Gastrocnemius medialis (tissue), 4 donors: ENCODE measurements at regions of chrX and their contacts with region 1.

Region 1: GRCh38 chrX:150062292-150063137 is 124.2 kb upstream of the EOLA2 start:
- DNase-seq: peak; percentile 67 to 82
- ATAC-seq: peak; percentile 99 to 100
- H3K4me3 ChIP-seq: no peak overlapping the region
- H3K27ac ChIP-seq: peak overlapping the region; percentile 61 to 74 (median 70)
- H3K4me1 ChIP-seq: peaks cover 4% of the 10 kb centered on the region in 2 donors
- H3K27me3 ChIP-seq: no peaks in the 10 kb centered on the region
- CTCF ChIP-seq: peak in 3 of 5 experiments; percentile 11 to 36 (median 29)
- POLR2A ChIP-seq: no peak

Region 2: GRCh38 chrX:149638860-149639259 is 423.7 kb before region 1 on chrX:
- in situ Hi-C with region 1: no loop called
- intact Hi-C with region 1: no loop called
- DNase-seq: no peak
- ATAC-seq: no peak
- H3K4me3 ChIP-seq: no peak overlapping the region
- H3K27ac ChIP-seq: no peak overlapping the region
- H3K4me1 ChIP-seq: no peaks in the 10 kb centered on the region
- H3K27me3 ChIP-seq: peaks cover 0 to 4% (median 0%) of the 10 kb centered on the region in 3 donors
- CTCF ChIP-seq: no peak
- POLR2A ChIP-seq: no peak

Region 3: DNA sequence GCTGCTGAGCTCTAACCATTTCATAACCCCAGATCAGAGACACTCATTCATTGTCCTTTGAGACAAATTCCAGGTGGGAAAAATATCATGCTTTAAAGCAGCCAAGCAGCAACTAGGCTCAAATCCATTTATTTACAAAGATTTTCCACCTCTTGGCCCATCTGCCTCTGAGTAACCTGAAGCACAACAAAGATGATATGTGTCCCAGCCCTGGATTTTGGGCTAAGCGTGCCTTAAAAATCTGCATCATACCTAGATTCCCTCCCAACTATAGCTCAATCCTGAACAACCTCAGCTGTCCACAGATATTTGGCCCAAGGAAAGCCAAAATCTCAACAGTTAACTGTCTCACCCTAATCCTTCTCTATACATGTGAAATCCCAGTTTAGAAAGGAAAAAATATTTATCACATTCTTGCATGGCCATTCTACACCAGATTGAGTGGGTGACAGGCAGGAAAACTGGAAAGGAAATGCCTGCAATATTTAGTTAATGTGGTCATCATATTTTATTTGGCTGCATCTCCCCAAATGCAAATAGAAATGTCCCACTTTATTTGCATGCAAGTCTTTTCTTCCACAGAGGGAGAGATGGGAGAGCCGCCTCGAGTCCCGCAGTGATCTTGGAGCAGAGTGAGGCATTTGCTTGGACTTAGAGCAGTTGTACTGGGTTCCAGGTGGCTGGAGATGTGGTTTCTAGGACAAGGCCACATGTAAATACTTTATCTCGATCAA is 22.1 kb after region 1 on chrX:
- in situ Hi-C with region 1: no loop called
- intact Hi-C with region 1: loop called (anchors 2 kb)
- DNase-seq: no peak
- ATAC-seq: no peak
- H3K4me3 ChIP-seq: no peak overlapping the region
- H3K27ac ChIP-seq: no peak overlapping the region
- H3K4me1 ChIP-seq: no peaks in the 10 kb centered on the region
- H3K27me3 ChIP-seq: no peaks in the 10 kb centered on the region
- CTCF ChIP-seq: no peak
- POLR2A ChIP-seq: no peak